ENCODE measurements at regions of chr4 and their contacts with region 1.

Region 1: GRCh38 chr4:19776021-19776459 is 475.7 kb upstream of the SLIT2 start:
- DNase-seq: peak; percentile 47
- H3K4me3 Mint-ChIP-seq: peak overlapping the region; percentile 57
- H3K27ac Mint-ChIP-seq: peak overlapping the region; percentile 90
- H3K4me1 Mint-ChIP-seq: peaks cover 42% of the 10 kb centered on the region
- H3K27me3 Mint-ChIP-seq: no peaks in the 10 kb centered on the region
- CTCF ChIP-seq: no peak

Region 2: DNA sequence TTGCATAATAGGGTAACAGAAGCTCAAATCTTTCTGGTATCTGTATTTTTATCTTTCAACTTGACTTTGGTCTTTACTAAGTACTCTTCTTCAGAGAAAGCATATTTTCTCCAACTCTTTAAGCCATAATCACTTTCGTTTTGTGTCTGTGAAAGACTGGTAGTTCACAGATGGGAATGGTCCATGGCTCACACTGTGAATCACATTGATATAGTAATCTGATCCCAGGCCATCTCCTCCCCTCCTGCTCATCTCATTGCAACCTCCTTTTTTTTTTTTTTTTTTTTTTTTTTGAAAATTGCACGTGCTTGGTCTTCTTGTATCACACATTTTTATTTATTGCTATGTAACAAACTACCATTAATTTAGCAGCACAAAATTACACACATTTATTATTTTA is 218.9 kb before region 1 on chr4:
- CTCF ChIA-PET with region 1: no interaction called
- intact Hi-C with region 1: loop called (anchors 5 kb)
- DNase-seq: no peak
- H3K4me3 Mint-ChIP-seq: no peak overlapping the region
- H3K27ac Mint-ChIP-seq: no peak overlapping the region
- H3K4me1 Mint-ChIP-seq: peaks cover 25% of the 10 kb centered on the region
- H3K27me3 Mint-ChIP-seq: no peaks in the 10 kb centered on the region
- CTCF ChIP-seq: no peak

Region 3: GRCh38 chr4:19739101-19739720 is 36.8 kb before region 1 on chr4:
- CTCF ChIA-PET with region 1: no interaction called
- intact Hi-C with region 1: loop called (anchors 5 kb)
- DNase-seq: peak; percentile 42
- H3K4me3 Mint-ChIP-seq: peak overlapping the region; percentile 42
- H3K27ac Mint-ChIP-seq: peak overlapping the region; percentile 69
- H3K4me1 Mint-ChIP-seq: peaks cover 31% of the 10 kb centered on the region
- H3K27me3 Mint-ChIP-seq: no peaks in the 10 kb centered on the region
- CTCF ChIP-seq: no peak